AG04449 (cell line): ENCODE measurements at regions of chr5 and their contacts with region 1.

Region 1: DNA sequence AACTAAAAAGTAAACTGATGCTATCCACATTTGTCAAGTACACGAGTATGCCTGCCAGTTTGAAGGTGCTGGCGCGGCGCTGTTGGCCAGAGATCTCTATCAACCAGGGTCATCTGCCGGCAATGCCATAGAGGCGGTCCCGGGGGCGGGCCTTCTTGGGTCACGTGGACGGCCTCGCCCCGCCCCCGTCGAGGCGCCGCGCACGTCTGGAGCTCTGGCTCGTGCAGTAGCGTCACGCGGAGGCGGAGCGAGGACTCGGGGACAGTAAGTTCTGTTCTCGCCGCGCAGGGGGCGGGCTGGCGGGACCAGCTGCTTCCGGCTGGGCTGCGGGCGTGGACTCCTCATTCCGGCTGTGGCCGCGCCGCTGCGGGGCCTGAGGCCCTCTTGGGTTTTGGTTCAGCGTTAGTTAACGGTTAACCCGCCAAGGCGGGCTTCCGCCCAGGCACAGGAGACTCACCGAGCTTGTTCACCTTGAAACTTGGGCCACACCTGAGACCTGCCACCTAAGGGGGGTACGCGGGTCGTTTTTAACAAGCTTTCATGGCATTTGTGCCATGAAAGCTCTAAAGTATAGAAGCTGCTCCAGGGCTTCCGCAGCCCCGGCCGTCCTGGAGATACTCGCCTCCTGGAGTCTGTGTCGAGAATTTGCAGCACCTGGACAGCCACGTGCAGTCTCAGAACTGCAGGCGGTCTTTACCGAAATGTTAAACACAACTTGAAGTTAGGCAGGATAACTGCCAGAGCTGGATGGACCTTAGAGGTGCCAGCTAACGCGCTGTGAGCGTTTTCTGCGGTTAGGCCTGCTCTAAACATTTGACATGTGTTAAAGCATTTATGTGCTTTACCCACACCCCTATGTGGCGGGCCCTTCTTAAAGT is at the start of gene RFESD:
- DNase-seq: peak; percentile 58
- H3K4me3 ChIP-seq: peak within 1 kb of the TSS; percentile 63
- CTCF ChIP-seq: peak; percentile 18

Region 2: GRCh38 chr5:95631991-95632675 is 14.7 kb before region 1 on chr5:
- CTCF ChIA-PET with region 1: interaction called, 26 read pairs
- POLR2A ChIA-PET with region 1: interaction called, 3 read pairs
- DNase-seq: no peak
- H3K4me3 ChIP-seq: no peak overlapping the region
- CTCF ChIP-seq: no peak

Region 3: GRCh38 chr5:95669540-95669939 is 22.7 kb after region 1 on chr5:
- CTCF ChIA-PET with region 1: interaction called, 37 read pairs
- POLR2A ChIA-PET with region 1: no interaction called
- DNase-seq: peak; percentile 98
- H3K4me3 ChIP-seq: no peak overlapping the region
- CTCF ChIP-seq: no peak

Region 4: GRCh38 chr5:95822542-95823181 is 175.9 kb after region 1 on chr5 and contains the start of gene GLRX:
- CTCF ChIA-PET with region 1: interaction called, 11 read pairs
- POLR2A ChIA-PET with region 1: no interaction called
- DNase-seq: peak; percentile 86
- H3K4me3 ChIP-seq: peak within 1 kb of the TSS; percentile 83
- CTCF ChIP-seq: no peak

Region 5: DNA sequence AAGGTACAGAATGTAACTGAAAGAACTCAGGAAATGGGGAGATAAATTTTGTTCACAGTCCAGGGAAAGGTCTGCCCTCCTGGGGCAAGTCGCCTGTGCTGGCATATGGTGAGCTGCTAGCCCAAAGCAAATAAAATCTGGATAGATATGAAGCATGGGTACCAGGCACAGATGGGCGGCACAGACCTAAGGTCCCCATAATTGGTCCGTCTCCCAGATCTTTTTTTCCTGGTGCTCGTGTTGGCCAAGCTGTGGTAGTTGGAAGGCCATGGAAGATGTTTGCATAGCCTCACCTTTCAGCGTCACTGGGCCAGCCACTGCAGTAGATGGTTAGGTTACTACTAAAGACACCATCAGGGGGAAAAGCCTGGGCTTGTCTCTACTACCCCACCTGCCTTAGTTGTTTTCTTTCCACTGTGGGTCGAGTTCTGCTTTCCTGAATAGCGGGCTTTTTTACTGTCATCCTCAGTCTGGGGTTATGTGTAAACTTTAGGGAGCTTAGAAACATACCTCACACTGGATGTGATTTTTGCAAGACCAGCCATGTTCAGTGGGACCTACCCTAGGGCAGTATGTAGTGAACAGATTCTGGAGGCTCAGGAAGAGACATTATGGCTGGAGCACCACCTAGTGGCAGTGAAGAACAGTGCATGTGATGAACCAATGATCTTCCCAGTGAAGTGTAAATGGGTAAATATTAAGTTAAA is 199.9 kb after region 1 on chr5:
- CTCF ChIA-PET with region 1: interaction called, 222 read pairs
- POLR2A ChIA-PET with region 1: interaction called, 5 read pairs
- DNase-seq: no peak
- H3K4me3 ChIP-seq: no peak overlapping the region
- CTCF ChIP-seq: peak; percentile 82